ENCODE measurements at regions of chr13 and their contacts with region 1.

Region 1: GRCh38 chr13:109436055-109436622 is 350.2 kb downstream of the IRS2 start:
- DNase-seq: peak; percentile 98
- H3K4me3 ChIP-seq: peak overlapping the region in 1 of 3 experiments; percentile 7
- H3K27ac ChIP-seq: peak overlapping the region; percentile 65
- H3K4me1 ChIP-seq: peaks cover 26% of the 10 kb centered on the region
- H3K27me3 ChIP-seq: no peaks in the 10 kb centered on the region
- CTCF ChIP-seq: no peak

Region 2: GRCh38 chr13:109344552-109345157 is 91.5 kb before region 1 on chr13:
- CTCF ChIA-PET with region 1: no interaction called
- dilution Hi-C with region 1: no loop called
- in situ Hi-C with region 1: no loop called
- intact Hi-C with region 1: loop called (anchors 5 kb)
- DNase-seq: peak; percentile 27
- H3K4me3 ChIP-seq: no peak overlapping the region
- H3K27ac ChIP-seq: no peak overlapping the region
- H3K4me1 ChIP-seq: peaks cover 26% of the 10 kb centered on the region
- H3K27me3 ChIP-seq: no peaks in the 10 kb centered on the region
- CTCF ChIP-seq: no peak

Region 3: GRCh38 chr13:109383670-109384069 is 52.5 kb before region 1 on chr13:
- CTCF ChIA-PET with region 1: no interaction called
- dilution Hi-C with region 1: no loop called
- in situ Hi-C with region 1: no loop called
- intact Hi-C with region 1: no loop called
- DNase-seq: peak; percentile 90
- H3K4me3 ChIP-seq: no peak overlapping the region
- H3K27ac ChIP-seq: peak overlapping the region; percentile 13
- H3K4me1 ChIP-seq: peaks cover 29% of the 10 kb centered on the region
- H3K27me3 ChIP-seq: no peaks in the 10 kb centered on the region
- CTCF ChIP-seq: peak in 1 of 2 donors; percentile 27

Region 4: GRCh38 chr13:109743706-109744453 is 307.7 kb after region 1 on chr13:
- CTCF ChIA-PET with region 1: no interaction called
- dilution Hi-C with region 1: no loop called
- in situ Hi-C with region 1: no loop called
- intact Hi-C with region 1: loop called (anchors 5 kb)
- DNase-seq: peak; percentile 91
- H3K4me3 ChIP-seq: no peak overlapping the region
- H3K27ac ChIP-seq: peak overlapping the region; percentile 59
- H3K4me1 ChIP-seq: peaks cover 22% of the 10 kb centered on the region
- H3K27me3 ChIP-seq: no peaks in the 10 kb centered on the region
- CTCF ChIP-seq: peak; percentile 4 to 12

Region 5: GRCh38 chr13:110012102-110012739 is 576.1 kb after region 1 on chr13:
- CTCF ChIA-PET with region 1: no interaction called
- dilution Hi-C with region 1: no loop called
- in situ Hi-C with region 1: no loop called
- intact Hi-C with region 1: loop called (anchors 2 kb)
- DNase-seq: peak; percentile 89
- H3K4me3 ChIP-seq: no peak overlapping the region
- H3K27ac ChIP-seq: peak overlapping the region; percentile 100
- H3K4me1 ChIP-seq: peaks cover 59% of the 10 kb centered on the region
- H3K27me3 ChIP-seq: no peaks in the 10 kb centered on the region
- CTCF ChIP-seq: no peak

Region 6: GRCh38 chr13:110103534-110103933 is 667.4 kb after region 1 on chr13:
- CTCF ChIA-PET with region 1: no interaction called
- dilution Hi-C with region 1: no loop called
- in situ Hi-C with region 1: loop called in 1 of 2 experiments (anchors 25 kb)
- intact Hi-C with region 1: loop called (anchors 5 kb)
- DNase-seq: peak; percentile 81
- H3K4me3 ChIP-seq: no peak overlapping the region
- H3K27ac ChIP-seq: peak overlapping the region; percentile 52
- H3K4me1 ChIP-seq: peaks cover 13% of the 10 kb centered on the region
- H3K27me3 ChIP-seq: no peaks in the 10 kb centered on the region
- CTCF ChIP-seq: no peak

Measured in mammary epithelial cell (primary cell).